ENCODE measurements at regions of chr7 and their contacts with region 1.

Region 1: DNA sequence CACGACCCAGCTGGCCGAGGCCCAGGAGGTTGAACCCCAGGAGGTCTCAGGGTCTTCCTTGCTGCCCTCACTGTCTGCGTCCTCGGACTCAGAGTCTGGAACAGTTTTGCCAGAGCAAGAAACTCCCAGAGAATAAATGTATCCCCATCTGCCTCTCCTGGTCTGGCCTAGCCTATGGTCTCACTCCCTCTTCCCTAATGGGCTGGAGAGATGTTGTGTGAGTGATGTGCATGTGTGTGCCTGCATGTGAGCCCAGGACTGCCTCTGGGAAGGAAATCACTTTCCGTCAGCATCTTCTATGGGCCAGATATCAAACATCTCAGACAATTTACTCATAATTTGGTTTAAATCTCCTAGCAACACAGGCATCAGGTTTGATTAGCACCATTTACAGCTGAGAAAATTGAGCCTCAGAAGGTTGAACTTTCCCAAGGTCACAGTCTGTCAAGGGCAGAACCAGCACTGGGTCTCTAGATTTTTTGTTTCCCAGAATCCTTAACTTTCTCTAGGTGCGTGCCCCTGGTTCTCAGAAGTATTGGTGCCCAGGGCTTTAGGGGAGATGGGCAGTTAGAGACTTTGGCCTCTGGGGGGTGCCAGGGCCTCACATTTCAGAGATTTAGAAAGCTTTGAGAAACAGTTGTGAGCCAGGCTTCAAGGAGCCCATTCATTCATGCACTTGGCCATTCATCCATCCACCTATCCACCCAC is 4.9 kb downstream of the TMEM270 start:
- DNase-seq: peak in 2 of 4 donors; percentile 7 to 63
- ATAC-seq: peak; percentile 69
- H3K4me3 ChIP-seq: no peak overlapping the region
- H3K27ac ChIP-seq: no peak overlapping the region
- H3K4me1 ChIP-seq: peaks cover 4 to 20% of the 10 kb centered on the region in 2 donors
- H3K27me3 ChIP-seq: no peaks in the 10 kb centered on the region
- CTCF ChIP-seq: peak; percentile 59 to 63

Region 2: DNA sequence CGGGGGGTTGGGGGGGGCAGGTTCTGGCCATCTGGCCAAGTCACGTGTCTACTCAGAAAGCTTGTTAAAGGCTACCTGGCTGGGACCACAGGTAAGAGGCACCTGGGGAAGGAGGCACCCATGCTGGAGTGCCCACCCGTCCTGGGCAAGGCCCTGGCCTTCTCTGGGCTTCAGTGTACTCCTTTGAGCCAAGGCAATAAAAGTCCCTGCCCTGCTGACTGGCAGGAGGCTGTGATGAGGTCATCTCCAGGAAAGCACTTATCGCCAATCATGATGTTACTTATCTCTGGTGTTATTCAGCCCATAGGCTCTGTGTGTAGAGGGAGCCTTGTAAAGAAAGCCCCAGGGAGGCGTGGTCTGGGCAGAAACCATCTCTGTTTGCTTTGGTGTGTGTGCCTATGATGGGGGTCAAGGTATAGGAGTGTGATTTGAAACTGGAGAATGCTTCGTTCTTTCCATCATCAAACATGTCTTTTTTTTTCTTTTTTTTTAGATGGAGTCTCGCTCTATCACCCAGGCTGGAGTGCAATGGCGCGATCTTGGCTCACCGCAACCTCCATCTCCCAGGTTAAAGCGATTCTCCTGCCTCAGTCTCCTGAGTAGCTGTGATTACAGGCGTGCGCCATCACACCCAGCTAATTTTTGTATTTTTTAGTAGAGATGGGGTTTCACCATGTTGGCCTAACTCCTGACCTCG is 37.6 kb before region 1 on chr7:
- intact Hi-C with region 1: no loop called
- DNase-seq: peak in 3 of 4 donors; percentile 70 to 73 (median 70)
- ATAC-seq: peak; percentile 49
- H3K4me3 ChIP-seq: no peak overlapping the region
- H3K27ac ChIP-seq: peak overlapping the region; percentile 65 to 68
- H3K4me1 ChIP-seq: peaks cover 19 to 31% of the 10 kb centered on the region in 2 donors
- H3K27me3 ChIP-seq: peaks cover 0 to 9% of the 10 kb centered on the region in 2 donors
- CTCF ChIP-seq: no peak

Region 3: GRCh38 chr7:74026903-74027551 is 161.1 kb after region 1 on chr7:
- intact Hi-C with region 1: loop called in 1 of 2 experiments (anchors 5 kb)
- DNase-seq: peak; percentile 69 to 92 (median 76)
- ATAC-seq: peak; percentile 81
- H3K4me3 ChIP-seq: no peak overlapping the region
- H3K27ac ChIP-seq: peak overlapping the region; percentile 50 to 62
- H3K4me1 ChIP-seq: peaks cover 9 to 34% of the 10 kb centered on the region in 2 donors
- H3K27me3 ChIP-seq: peaks cover 0 to 89% of the 10 kb centered on the region in 2 donors
- CTCF ChIP-seq: peak; percentile 93 to 95

Region 4: DNA sequence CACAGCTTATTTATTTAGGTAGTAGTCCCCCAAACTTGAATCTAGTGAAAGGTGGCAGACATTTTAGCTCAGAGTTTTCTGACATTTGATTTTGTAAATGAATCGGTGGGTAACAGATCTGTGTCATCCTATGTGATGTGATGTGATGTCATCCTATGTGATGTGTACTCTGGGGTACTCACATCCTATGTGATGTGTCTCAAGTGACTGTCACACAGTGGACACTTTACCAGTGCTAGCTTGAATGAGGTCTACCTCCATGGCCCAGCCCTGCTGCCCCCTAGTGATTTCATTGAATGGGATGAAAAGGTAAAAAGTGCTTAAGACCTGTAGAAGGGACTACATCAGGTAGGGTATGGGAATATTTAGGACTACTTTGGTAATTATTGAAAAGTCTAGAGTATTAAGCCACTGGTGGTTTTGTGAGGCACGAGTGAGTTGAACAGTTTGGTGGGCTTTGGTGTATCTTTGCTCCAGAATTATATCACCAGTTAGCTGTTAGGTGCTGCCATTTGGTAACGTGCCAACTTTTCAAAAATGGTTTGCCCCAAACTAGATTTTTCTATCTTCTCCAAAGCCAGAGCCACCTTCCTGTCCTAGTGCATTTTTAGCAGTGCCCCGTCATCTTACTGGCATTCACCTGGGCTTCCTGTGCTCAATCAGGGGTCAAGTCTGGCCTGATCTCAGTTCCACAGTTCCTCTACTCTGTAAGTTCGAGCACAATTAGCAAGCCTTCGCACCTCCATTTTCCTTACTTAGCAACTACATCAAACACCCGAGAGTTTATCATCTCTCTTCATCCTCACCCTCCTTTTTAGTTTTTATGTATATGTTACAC is 317.9 kb after region 1 on chr7:
- intact Hi-C with region 1: loop called in 1 of 2 experiments (anchors 10 kb)
- DNase-seq: no peak
- ATAC-seq: no peak
- H3K4me3 ChIP-seq: no peak overlapping the region
- H3K27ac ChIP-seq: no peak overlapping the region
- H3K4me1 ChIP-seq: peaks cover 44 to 94% of the 10 kb centered on the region in 2 donors
- H3K27me3 ChIP-seq: no peaks in the 10 kb centered on the region
- CTCF ChIP-seq: no peak